ENCODE measurements at regions of chr19 and their contacts with region 1.

Region 1: DNA sequence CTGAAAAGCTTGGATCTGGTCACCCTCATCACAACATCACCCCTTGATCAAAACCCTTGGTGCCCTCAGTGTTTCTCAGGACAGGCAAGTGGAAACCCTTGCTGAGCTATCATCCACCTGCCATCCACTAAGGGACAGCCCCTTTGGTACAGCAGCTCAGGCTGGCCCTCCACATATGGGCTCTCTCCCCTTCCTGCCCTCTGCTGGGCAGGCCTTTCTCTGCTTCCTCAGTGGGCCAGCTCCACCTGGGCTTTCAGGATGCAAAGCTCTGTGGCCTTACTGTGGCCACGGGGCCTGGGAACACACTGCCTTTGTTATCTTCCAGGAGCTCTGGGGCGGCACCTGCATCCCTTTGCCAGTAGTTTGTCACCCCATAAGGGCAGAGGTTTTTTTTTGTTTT is 4.9 kb downstream of the SUGP1 start:
- DNase-seq: no peak
- ATAC-seq: no peak
- H3K4me3 ChIP-seq: no peak overlapping the region
- H3K27ac ChIP-seq: no peak overlapping the region
- H3K4me1 ChIP-seq: peaks cover 5% of the 10 kb centered on the region; the same call in 1 of the 2 replicates
- H3K27me3 ChIP-seq: no peaks in the 10 kb centered on the region
- CTCF ChIP-seq: no peak

Region 2: DNA sequence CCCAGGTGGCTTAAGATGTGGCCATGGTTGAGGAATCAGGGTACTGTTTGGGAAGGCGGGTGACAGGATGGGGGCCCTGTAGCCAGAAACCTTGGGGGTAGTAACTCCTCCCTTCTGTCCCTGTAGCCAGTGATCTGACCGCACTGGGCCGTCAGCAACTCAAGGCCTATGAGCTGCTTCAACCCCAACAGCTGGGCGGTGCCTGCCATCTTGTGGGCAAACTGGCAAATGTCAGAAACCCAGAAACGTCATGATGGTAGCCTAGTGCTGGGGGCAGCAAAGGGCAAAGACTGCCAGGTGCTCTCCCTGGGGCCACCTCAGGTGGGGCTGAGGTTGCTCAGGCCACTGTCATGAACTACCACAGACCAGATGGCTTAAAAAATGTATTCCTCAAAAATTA is 399.8 kb before region 1 on chr19:
- CTCF ChIA-PET with region 1: no interaction called
- POLR2A ChIA-PET with region 1: no interaction called
- in situ Hi-C with region 1: no loop called
- intact Hi-C with region 1: no loop called
- DNase-seq: no peak
- ATAC-seq: peak; percentile 34; the same call in 1 of the 2 replicates
- H3K4me3 ChIP-seq: no peak overlapping the region
- H3K27ac ChIP-seq: no peak overlapping the region
- H3K4me1 ChIP-seq: 0 out of 2 replicates have a peak, but pooled peaks cover 2% of the 10 kb centered on the region
- H3K27me3 ChIP-seq: no peaks in the 10 kb centered on the region
- CTCF ChIP-seq: no peak; the same call in 1 of the 2 replicates

Region 3: GRCh38 chr19:19218911-19219310 is 96.5 kb before region 1 on chr19:
- CTCF ChIA-PET with region 1: interaction called, 10 read pairs
- POLR2A ChIA-PET with region 1: no interaction called
- in situ Hi-C with region 1: no loop called
- intact Hi-C with region 1: no loop called
- DNase-seq: no peak
- ATAC-seq: no peak
- H3K4me3 ChIP-seq: no peak overlapping the region
- H3K27ac ChIP-seq: no peak overlapping the region
- H3K4me1 ChIP-seq: no peaks in the 10 kb centered on the region
- H3K27me3 ChIP-seq: no peaks in the 10 kb centered on the region
- CTCF ChIP-seq: no peak

Region 4: DNA sequence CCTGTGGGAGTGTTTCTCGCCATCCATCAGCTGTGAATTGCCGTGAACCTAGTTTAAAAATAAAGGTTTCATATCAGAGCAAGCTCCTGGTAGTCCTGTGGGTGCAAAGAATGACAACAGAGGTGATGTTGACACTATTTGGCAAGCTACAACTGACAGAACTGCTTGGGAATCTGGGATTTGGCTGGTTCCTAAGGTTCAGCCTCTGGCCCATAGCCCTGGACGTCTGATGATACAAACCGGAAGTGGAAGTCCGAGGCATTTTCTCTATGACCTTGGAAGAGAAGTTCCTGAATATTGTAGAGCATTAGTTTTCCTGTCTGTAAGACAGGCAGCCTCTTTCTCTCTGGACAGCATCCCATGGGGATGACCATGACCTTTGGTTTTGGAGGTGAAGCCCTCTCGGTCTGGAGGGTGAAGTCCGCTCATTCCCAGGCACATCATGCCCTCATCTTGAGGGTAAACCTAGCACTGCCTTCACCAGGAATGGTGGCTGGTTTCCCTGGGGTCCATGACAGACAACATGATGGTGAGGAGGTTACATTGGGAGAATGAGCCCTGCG is 119.1 kb after region 1 on chr19:
- CTCF ChIA-PET with region 1: no interaction called
- POLR2A ChIA-PET with region 1: no interaction called
- in situ Hi-C with region 1: no loop called
- intact Hi-C with region 1: no loop called
- DNase-seq: no peak
- ATAC-seq: no peak
- H3K4me3 ChIP-seq: no peak overlapping the region
- H3K27ac ChIP-seq: no peak overlapping the region
- H3K4me1 ChIP-seq: no peaks in the 10 kb centered on the region
- H3K27me3 ChIP-seq: no peaks in the 10 kb centered on the region
- CTCF ChIP-seq: no peak

Measured in Panc1 (cell line).